ENCODE measurements at regions of chr6 and their contacts with region 1.

Region 1: DNA sequence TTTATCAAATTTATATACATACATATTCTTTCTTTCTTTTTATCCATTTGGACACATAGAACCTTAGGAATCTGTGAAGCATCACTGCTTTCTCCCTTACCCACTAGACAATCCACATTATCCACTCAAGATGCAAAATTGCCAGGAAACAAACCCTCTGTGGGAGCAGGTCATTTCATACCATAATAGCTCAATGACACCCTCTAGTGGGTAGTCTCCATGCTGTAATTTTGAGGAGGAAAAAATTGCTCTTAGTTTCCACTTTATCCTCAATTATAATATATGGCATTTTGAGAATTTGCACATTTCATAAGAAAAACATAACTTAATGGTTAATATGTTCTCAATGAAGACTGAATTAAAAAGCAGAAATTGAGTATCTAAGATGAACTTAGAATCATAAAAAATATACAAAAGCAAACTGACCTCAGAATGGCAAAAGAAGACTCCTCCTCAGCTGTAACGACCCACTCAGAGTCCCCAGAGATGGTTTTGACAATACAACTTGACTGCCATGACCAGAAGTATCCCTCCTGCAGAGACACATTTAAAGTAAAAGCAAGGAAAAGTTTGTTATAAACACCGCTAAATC is 164.1 kb downstream of the FRK start:
- DNase-seq: no peak
- ATAC-seq: no peak
- H3K4me3 ChIP-seq: no peak overlapping the region
- H3K27ac ChIP-seq: no peak overlapping the region
- H3K4me1 ChIP-seq: no peaks in the 10 kb centered on the region
- H3K27me3 ChIP-seq: no peaks in the 10 kb centered on the region
- CTCF ChIP-seq: peak; percentile 23 to 73 (median 64)

Region 2: GRCh38 chr6:114747987-114748630 is 1148.5 kb before region 1 on chr6:
- intact Hi-C with region 1: loop called in 7 of 10 experiments (anchors 2 to 10 kb)
- DNase-seq: peak in 1 of 2 donors; percentile 28
- ATAC-seq: no peak
- H3K4me3 ChIP-seq: no peak overlapping the region
- H3K27ac ChIP-seq: no peak overlapping the region
- H3K4me1 ChIP-seq: no peaks in the 10 kb centered on the region
- H3K27me3 ChIP-seq: no peaks in the 10 kb centered on the region
- CTCF ChIP-seq: peak; percentile 33 to 74 (median 62)

Region 3: GRCh38 chr6:115485400-115485799 is 411.2 kb before region 1 on chr6:
- intact Hi-C with region 1: no loop called
- DNase-seq: no peak
- ATAC-seq: no peak
- H3K4me3 ChIP-seq: no peak overlapping the region
- H3K27ac ChIP-seq: no peak overlapping the region
- H3K4me1 ChIP-seq: no peaks in the 10 kb centered on the region
- H3K27me3 ChIP-seq: no peaks in the 10 kb centered on the region
- CTCF ChIP-seq: no peak

Region 4: GRCh38 chr6:115847671-115848070 is 49.0 kb before region 1 on chr6:
- intact Hi-C with region 1: no loop called
- DNase-seq: no peak
- ATAC-seq: no peak
- H3K4me3 ChIP-seq: no peak overlapping the region
- H3K27ac ChIP-seq: no peak overlapping the region
- H3K4me1 ChIP-seq: no peaks in the 10 kb centered on the region
- H3K27me3 ChIP-seq: no peaks in the 10 kb centered on the region
- CTCF ChIP-seq: no peak

Measured in heart right ventricle (tissue), 16 donors.